ENCODE measurements at regions of chr22 and their contacts with region 1.

Region 1: GRCh38 chr22:36743591-36744412 is 32.1 kb downstream of the IFT27 start:
- DNase-seq: no peak
- H3K4me3 ChIP-seq: no peak overlapping the region
- H3K4me3 Mint-ChIP-seq: no peak overlapping the region
- H3K27ac ChIP-seq: no peak overlapping the region
- H3K27ac Mint-ChIP-seq: no peak overlapping the region
- H3K4me1 ChIP-seq: no peaks in the 10 kb centered on the region
- H3K4me1 Mint-ChIP-seq: no peaks in the 10 kb centered on the region
- H3K27me3 ChIP-seq: no peaks in the 10 kb centered on the region
- H3K27me3 Mint-ChIP-seq: peaks cover 11 to 23% of the 10 kb centered on the region in 2 donors

Region 2: GRCh38 chr22:36757668-36758211 is 13.9 kb after region 1 on chr22:
- CTCF ChIA-PET with region 1: interaction called, 16 read pairs
- POLR2A ChIA-PET with region 1: no interaction called
- DNase-seq: peak; percentile 43 to 81 (median 52)
- H3K4me3 ChIP-seq: no peak overlapping the region
- H3K4me3 Mint-ChIP-seq: no peak overlapping the region
- H3K27ac ChIP-seq: no peak overlapping the region
- H3K27ac Mint-ChIP-seq: peak overlapping the region in 1 of 8 donors; percentile 59
- H3K4me1 ChIP-seq: no peaks in the 10 kb centered on the region
- H3K4me1 Mint-ChIP-seq: peaks cover 0 to 4% (median 3%) of the 10 kb centered on the region in 3 donors
- H3K27me3 ChIP-seq: no peaks in the 10 kb centered on the region
- H3K27me3 Mint-ChIP-seq: peaks cover 8 to 19% of the 10 kb centered on the region in 2 donors